IMR-90 (cell line): ENCODE measurements at regions of chr2 and their contacts with region 1.

Region 1: DNA sequence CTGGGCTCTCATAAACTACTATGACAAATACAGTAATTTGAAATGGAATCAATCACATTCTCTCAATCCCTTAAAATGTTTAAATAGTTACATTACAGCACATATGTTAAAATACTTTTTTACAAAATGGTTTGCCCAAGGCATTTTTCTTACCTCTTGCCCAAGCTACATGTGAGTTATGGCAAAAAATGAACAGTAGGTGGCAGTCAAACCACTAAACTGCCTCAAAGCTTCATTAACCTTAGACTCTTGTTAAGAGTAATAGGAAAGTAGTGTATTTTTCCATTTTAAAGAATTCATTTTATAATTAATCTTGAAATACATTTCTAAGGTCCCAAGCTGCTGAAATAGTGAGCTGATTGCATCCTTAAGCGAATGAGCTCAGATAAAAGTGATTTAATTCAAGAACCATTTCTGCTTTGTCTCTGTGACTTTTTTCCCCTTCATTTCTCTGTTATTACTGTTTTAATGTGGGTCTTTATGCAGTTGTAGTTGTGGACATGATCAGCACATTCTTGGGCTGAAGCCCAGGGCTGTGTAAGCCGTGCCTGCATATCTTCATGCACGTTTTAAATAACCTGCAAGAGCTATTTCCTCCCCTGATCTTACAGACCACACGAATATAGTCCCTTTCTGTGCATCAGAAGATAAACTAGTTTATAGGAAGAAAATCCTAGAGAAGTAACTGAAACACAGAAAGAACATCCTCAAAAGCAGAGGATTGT is 311.8 kb downstream of the LNPK start:
- DNase-seq: peak; percentile 78
- ATAC-seq: peak; percentile 82
- H3K4me3 ChIP-seq: no peak overlapping the region
- H3K27ac ChIP-seq: no peak overlapping the region
- H3K4me1 ChIP-seq: no peaks in the 10 kb centered on the region
- H3K27me3 ChIP-seq: peaks cover 2% of the 10 kb centered on the region
- CTCF ChIP-seq: peak; percentile 85
- POLR2A ChIP-seq: 0 out of 2 replicates have a peak, but pooled peaks have one; percentile 19
- RAD21 ChIP-seq: peak; percentile 82

Region 2: GRCh38 chr2:175195012-175195411 is 495.3 kb before region 1 on chr2:
- CTCF ChIA-PET with region 1: no interaction called
- POLR2A ChIA-PET with region 1: no interaction called
- dilution Hi-C with region 1: no loop called
- in situ Hi-C with region 1: no loop called
- intact Hi-C with region 1: no loop called
- DNase-seq: no peak
- ATAC-seq: no peak
- H3K4me3 ChIP-seq: no peak overlapping the region
- H3K27ac ChIP-seq: no peak overlapping the region
- H3K4me1 ChIP-seq: no peaks in the 10 kb centered on the region
- H3K27me3 ChIP-seq: peaks cover 4% of the 10 kb centered on the region
- CTCF ChIP-seq: no peak
- POLR2A ChIP-seq: no peak
- RAD21 ChIP-seq: no peak

Region 3: DNA sequence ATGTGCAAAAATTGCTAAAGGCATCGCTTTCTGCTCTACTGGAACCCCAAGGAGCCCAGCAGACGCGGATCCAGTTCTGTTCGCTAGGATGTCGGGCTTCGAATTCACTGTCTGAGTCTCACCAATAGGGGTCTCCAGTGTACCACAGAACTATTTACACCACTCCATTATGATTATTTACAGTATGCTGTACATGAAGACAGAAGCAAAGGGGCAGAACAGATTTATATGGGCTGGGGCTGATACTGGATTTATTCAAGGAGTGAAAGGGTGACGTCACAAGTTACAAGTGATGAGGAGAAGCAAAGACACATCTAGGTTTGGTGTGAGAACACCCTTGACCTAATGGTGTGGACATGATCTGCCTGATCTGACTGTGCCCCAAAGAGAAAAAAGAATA is 323.5 kb before region 1 on chr2:
- CTCF ChIA-PET with region 1: no interaction called
- POLR2A ChIA-PET with region 1: no interaction called
- dilution Hi-C with region 1: no loop called
- in situ Hi-C with region 1: no loop called
- intact Hi-C with region 1: loop called (anchors 5 kb)
- DNase-seq: peak; percentile 43
- ATAC-seq: peak; percentile 91
- H3K4me3 ChIP-seq: no peak overlapping the region
- H3K27ac ChIP-seq: no peak overlapping the region
- H3K4me1 ChIP-seq: no peaks in the 10 kb centered on the region
- H3K27me3 ChIP-seq: peaks cover 6% of the 10 kb centered on the region
- CTCF ChIP-seq: peak; percentile 68
- POLR2A ChIP-seq: no peak
- RAD21 ChIP-seq: peak; percentile 68

Region 4: GRCh38 chr2:175844169-175844568 is 153.9 kb after region 1 on chr2:
- CTCF ChIA-PET with region 1: no interaction called
- POLR2A ChIA-PET with region 1: no interaction called
- dilution Hi-C with region 1: no loop called
- in situ Hi-C with region 1: no loop called
- intact Hi-C with region 1: no loop called
- DNase-seq: peak; percentile 78
- ATAC-seq: peak; percentile 67
- H3K4me3 ChIP-seq: no peak overlapping the region
- H3K27ac ChIP-seq: no peak overlapping the region
- H3K4me1 ChIP-seq: no peaks in the 10 kb centered on the region; the same call in 1 of the 2 replicates
- H3K27me3 ChIP-seq: no peaks in the 10 kb centered on the region
- CTCF ChIP-seq: no peak
- POLR2A ChIP-seq: no peak
- RAD21 ChIP-seq: no peak

Region 5: GRCh38 chr2:175937216-175937615 is 246.9 kb after region 1 on chr2:
- CTCF ChIA-PET with region 1: no interaction called
- POLR2A ChIA-PET with region 1: no interaction called
- dilution Hi-C with region 1: no loop called
- in situ Hi-C with region 1: no loop called
- intact Hi-C with region 1: no loop called
- DNase-seq: no peak
- ATAC-seq: no peak
- H3K4me3 ChIP-seq: no peak overlapping the region
- H3K27ac ChIP-seq: no peak overlapping the region
- H3K4me1 ChIP-seq: no peaks in the 10 kb centered on the region
- H3K27me3 ChIP-seq: no peaks in the 10 kb centered on the region
- CTCF ChIP-seq: no peak
- POLR2A ChIP-seq: no peak
- RAD21 ChIP-seq: no peak

Region 6: GRCh38 chr2:176001916-176002687 is 311.8 kb after region 1 on chr2 and contains the start of gene LNPK:
- CTCF ChIA-PET with region 1: no interaction called
- POLR2A ChIA-PET with region 1: no interaction called
- dilution Hi-C with region 1: no loop called
- in situ Hi-C with region 1: no loop called
- intact Hi-C with region 1: loop called (anchors 2 kb)
- DNase-seq: peak; percentile 82
- ATAC-seq: peak; percentile 95
- H3K4me3 ChIP-seq: peak within 1 kb of the TSS; percentile 76
- H3K27ac ChIP-seq: peak within 1 kb of the TSS; percentile 65
- H3K4me1 ChIP-seq: no peaks in the 10 kb centered on the region; the same call in 1 of the 2 replicates
- H3K27me3 ChIP-seq: no peaks in the 10 kb centered on the region
- CTCF ChIP-seq: no peak
- POLR2A ChIP-seq: peak; percentile 60; the same call in 1 of the 2 replicates
- RAD21 ChIP-seq: no peak
- total RNA-seq, gene LNPK: 48.6 and 59.4 TPM in 2 replicates